ENCODE measurements at regions of chr11 and their contacts with region 1.

Region 1: GRCh38 chr11:85941380-85941973 is 86.3 kb downstream of the CCDC83 start:
- DNase-seq: peak; percentile 82
- H3K4me3 ChIP-seq: no peak overlapping the region
- H3K27ac ChIP-seq: no peak overlapping the region
- H3K4me1 ChIP-seq: no peaks in the 10 kb centered on the region
- H3K27me3 ChIP-seq: no peaks in the 10 kb centered on the region
- CTCF ChIP-seq: peak; percentile 84

Region 2: DNA sequence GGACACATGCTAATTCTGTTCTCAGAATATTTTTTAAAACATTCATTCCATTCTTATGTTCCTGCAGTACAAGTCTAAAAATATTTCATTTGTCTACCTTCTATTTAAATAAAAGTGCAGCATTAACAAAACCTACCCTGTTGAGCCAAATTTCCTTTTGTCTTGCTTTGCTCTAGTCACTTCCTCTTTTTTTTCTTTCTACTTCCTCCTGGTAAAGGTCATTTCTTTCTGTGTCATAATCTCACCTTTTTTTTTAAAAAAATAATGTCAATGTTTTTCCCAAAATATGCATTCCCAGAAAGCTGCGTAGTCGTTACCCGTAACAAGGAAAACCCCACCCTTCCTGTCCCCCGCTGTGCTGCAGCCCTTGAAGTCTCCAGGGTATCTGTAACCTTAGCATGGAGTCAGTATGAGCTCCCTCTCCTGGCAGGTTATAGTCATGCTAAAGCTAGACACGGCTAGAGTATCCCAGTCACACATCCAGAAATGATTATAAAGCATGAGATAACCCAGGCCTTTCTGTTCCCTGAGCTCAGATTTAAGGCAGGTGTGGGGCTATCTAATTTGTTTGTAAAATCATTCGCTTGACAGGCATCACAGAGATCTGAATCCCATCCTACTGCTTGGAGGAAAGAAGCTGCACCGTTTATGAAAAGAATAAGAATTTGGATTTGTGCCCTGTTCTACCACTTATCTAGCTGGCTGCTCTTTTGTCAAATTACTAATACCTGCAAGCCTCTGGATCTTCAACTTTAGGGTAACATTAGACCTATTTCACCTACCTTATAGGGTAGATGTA is 252.0 kb after region 1 on chr11:
- CTCF ChIA-PET with region 1: interaction called, 4 read pairs
- POLR2A ChIA-PET with region 1: no interaction called
- intact Hi-C with region 1: loop called (anchors 2 kb)
- DNase-seq: peak; percentile 94
- H3K4me3 ChIP-seq: peak overlapping the region; percentile 25
- H3K27ac ChIP-seq: no peak overlapping the region
- H3K4me1 ChIP-seq: peaks cover 7% of the 10 kb centered on the region
- H3K27me3 ChIP-seq: no peaks in the 10 kb centered on the region
- CTCF ChIP-seq: peak; percentile 88

Region 3: GRCh38 chr11:86218125-86219084 is 276.9 kb after region 1 on chr11:
- CTCF ChIA-PET with region 1: no interaction called
- POLR2A ChIA-PET with region 1: no interaction called
- intact Hi-C with region 1: loop called (anchors 1 kb)
- DNase-seq: peak; percentile 89
- H3K4me3 ChIP-seq: no peak overlapping the region
- H3K27ac ChIP-seq: no peak overlapping the region
- H3K4me1 ChIP-seq: peaks cover 10% of the 10 kb centered on the region
- H3K27me3 ChIP-seq: no peaks in the 10 kb centered on the region
- CTCF ChIP-seq: peak; percentile 97

Region 4: GRCh38 chr11:86291466-86292262 is 350.2 kb after region 1 on chr11:
- CTCF ChIA-PET with region 1: interaction called, 5 read pairs
- POLR2A ChIA-PET with region 1: no interaction called
- intact Hi-C with region 1: loop called (anchors 1 kb)
- DNase-seq: peak; percentile 80
- H3K4me3 ChIP-seq: no peak overlapping the region
- H3K27ac ChIP-seq: no peak overlapping the region
- H3K4me1 ChIP-seq: no peaks in the 10 kb centered on the region
- H3K27me3 ChIP-seq: no peaks in the 10 kb centered on the region
- CTCF ChIP-seq: peak; percentile 86